OCI-LY7 (cell line): ENCODE measurements at regions of chr20 and their contacts with region 1.

Region 1: GRCh38 chr20:46349035-46349741 is 40.9 kb upstream of the CDH22 start:
- DNase-seq: peak; percentile 59
- H3K4me3 ChIP-seq: peak overlapping the region; percentile 17
- H3K27ac ChIP-seq: peak overlapping the region; percentile 57
- H3K4me1 ChIP-seq: peaks cover 24% of the 10 kb centered on the region
- CTCF ChIP-seq: peak; percentile 92

Region 2: GRCh38 chr20:46132705-46133120 is 216.5 kb before region 1 on chr20:
- CTCF ChIA-PET with region 1: no interaction called
- POLR2A ChIA-PET with region 1: no interaction called
- intact Hi-C with region 1: loop called (anchors 1 kb)
- DNase-seq: peak; percentile 74
- H3K4me3 ChIP-seq: no peak overlapping the region
- H3K27ac ChIP-seq: no peak overlapping the region
- H3K4me1 ChIP-seq: no peaks in the 10 kb centered on the region
- CTCF ChIP-seq: peak; percentile 88

Region 3: GRCh38 chr20:46307139-46307998 is 41.8 kb before region 1 on chr20:
- CTCF ChIA-PET with region 1: no interaction called
- POLR2A ChIA-PET with region 1: no interaction called
- intact Hi-C with region 1: loop called (anchors 2 kb)
- DNase-seq: peak; percentile 62
- H3K4me3 ChIP-seq: no peak overlapping the region
- H3K27ac ChIP-seq: no peak overlapping the region
- H3K4me1 ChIP-seq: no peaks in the 10 kb centered on the region
- CTCF ChIP-seq: peak; percentile 81

Region 4: DNA sequence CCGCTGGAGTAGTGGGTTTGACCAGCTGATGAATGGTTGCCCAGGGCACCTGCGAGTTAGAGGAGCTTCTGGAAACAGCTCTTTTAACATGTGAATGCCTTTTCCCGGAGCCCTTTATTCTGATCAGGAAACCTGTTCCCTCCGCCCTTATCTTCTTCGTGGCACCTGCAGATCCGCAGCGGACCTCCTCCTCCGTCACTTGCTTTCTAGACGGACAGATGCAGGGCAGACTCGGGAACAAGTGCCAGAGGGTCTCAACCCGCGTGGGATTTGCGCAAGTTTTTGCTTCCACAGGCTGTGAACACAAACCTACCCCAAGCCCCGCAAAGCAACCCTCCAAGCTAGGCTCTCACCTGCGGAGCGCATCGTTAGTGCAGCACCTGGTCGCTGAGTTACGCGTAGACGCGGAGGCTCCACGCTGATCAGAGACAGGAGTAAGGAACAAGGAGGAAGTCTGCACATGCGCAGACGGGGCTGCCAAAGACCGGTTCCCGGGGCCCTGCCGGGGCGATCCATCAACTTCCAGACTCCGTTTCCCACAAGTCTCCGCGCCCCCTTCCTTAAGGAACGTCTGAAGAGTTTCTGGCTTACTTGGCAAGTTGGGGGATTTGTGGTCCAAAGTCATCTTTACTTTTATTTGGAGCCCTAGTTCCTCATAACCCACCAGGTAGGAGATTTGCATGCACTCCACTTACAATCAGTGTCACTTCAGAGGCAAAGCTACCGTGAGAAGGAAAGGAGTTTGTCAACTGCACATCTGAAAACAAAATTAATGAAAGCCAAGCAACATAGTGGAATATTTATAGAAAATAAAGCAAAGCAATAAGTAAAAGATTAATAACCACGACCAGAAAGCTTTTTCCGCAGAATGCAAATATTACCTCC is 109.9 kb after region 1 on chr20:
- CTCF ChIA-PET with region 1: no interaction called
- POLR2A ChIA-PET with region 1: no interaction called
- intact Hi-C with region 1: no loop called
- DNase-seq: no peak
- H3K4me3 ChIP-seq: no peak overlapping the region
- H3K27ac ChIP-seq: no peak overlapping the region
- H3K4me1 ChIP-seq: no peaks in the 10 kb centered on the region
- CTCF ChIP-seq: no peak